CD4-positive, alpha-beta T cell (primary cell): ENCODE measurements at regions of chr5 and their contacts with region 1.

Region 1: DNA sequence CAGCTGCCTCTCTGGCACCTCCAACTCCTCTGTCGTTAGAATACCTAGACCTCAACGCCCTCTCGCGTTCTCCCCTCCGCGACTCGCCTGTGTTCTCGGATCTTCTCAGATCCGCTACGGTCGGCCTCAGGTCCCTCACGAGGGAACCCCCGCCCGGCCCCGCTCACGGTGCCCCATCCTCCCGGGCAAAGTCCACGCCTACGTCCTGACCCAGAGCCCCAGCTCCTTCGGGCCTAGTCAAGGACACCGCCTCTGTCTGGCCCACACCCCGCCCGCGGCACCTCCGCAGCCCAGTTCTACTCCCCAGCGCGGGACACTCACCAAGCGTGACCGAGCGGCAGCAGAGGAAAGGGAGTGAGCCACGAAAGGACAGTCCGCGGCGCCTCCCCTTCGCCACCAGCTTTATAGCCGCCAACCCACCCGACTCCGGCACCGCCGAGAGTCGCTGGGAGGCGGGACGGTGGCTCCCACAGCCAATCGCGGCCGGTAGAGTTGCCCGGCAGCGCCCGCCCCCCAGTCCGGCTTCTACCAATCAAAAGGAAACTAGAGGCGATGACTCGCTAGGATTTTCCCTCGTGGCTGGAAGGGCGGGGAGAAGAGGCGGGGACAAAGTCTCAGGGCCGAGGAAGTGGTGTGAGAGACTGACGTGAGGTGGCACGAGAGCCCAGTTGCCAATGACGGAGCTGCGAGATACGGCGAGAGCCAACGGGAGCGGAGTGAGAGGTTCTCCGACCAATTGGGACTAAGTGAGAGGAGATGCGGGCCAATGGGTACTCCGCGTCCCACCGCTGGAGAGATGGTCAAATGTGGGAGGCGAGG is at the start of gene HMGCS1:
- DNase-seq: peak; percentile 93 to 100 (median 98)
- ATAC-seq: peak; percentile 87
- H3K4me3 ChIP-seq: peak within 1 kb of the TSS; percentile 88
- H3K4me3 Mint-ChIP-seq: peak within 1 kb of the TSS; percentile 95
- H3K27ac ChIP-seq: peak within 1 kb of the TSS; percentile 96 to 97
- H3K27ac Mint-ChIP-seq: peak within 1 kb of the TSS; percentile 88
- H3K4me1 ChIP-seq: peaks cover 16% of the 10 kb centered on the region
- H3K4me1 Mint-ChIP-seq: peaks cover 24% of the 10 kb centered on the region
- H3K27me3 ChIP-seq: no peaks in the 10 kb centered on the region
- H3K27me3 Mint-ChIP-seq: no peaks in the 10 kb centered on the region
- CTCF ChIP-seq: no peak
- total RNA-seq, gene HMGCS1: 43.3 to 52.7 TPM

Region 2: DNA sequence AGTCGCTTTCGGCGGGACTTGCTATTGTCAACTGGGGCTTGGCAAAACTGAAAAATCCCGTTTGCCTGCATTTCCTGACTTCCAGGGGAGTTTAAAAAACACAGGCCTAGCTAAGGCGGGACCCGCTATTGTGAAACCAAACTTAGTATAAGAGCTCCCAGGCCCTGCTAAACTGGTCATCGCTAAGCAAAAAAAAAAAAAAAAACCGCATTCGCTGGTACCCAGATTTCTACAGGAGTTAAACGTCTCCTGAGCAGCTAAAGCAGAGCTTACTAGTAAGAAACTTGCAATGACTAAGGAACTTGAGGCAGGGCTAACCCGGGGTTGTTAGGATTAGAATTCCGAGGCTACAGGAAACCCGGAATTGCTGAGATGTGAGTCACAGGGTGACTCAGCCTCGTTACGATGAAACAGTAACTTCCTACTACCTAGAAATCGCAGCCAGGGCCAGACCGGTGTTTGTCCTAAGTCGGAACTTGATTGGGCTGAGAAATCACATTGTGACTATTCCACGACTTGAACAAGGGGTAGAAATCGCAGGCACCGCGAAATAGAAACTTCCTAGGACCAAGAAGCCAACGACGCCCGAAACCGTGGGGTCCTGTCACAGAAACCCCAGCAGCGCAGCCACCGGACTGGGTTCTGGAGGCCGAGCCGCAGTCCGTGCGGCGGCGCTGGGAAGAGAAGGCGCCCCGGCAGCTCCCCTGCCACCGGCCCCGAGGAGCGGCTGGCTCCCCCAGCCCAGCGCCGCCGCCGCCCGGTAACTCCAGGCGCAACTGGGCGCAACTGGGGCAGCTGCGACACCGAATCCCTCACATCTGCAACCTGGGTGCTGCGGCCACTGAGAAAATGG is 362.6 kb before region 1 on chr5:
- CTCF ChIA-PET with region 1: no interaction called
- POLR2A ChIA-PET with region 1: interaction called, 16 read pairs
- intact Hi-C with region 1: no loop called
- DNase-seq: peak; percentile 35 to 90 (median 61)
- ATAC-seq: peak; percentile 41
- H3K4me3 ChIP-seq: peak overlapping the region; percentile 75
- H3K4me3 Mint-ChIP-seq: peak overlapping the region; percentile 98
- H3K27ac ChIP-seq: peak overlapping the region; percentile 96 to 98
- H3K27ac Mint-ChIP-seq: peak overlapping the region; percentile 99
- H3K4me1 ChIP-seq: peaks cover 45% of the 10 kb centered on the region
- H3K4me1 Mint-ChIP-seq: peaks cover 30% of the 10 kb centered on the region
- H3K27me3 ChIP-seq: no peaks in the 10 kb centered on the region
- H3K27me3 Mint-ChIP-seq: no peaks in the 10 kb centered on the region
- CTCF ChIP-seq: no peak

Region 3: GRCh38 chr5:43019614-43020293 is 293.5 kb before region 1 on chr5:
- CTCF ChIA-PET with region 1: interaction called, 3 read pairs
- POLR2A ChIA-PET with region 1: interaction called, 32 read pairs
- intact Hi-C with region 1: no loop called
- DNase-seq: peak; percentile 73 to 97 (median 84)
- ATAC-seq: peak; percentile 61
- H3K4me3 ChIP-seq: peak overlapping the region; percentile 80
- H3K4me3 Mint-ChIP-seq: peak overlapping the region; percentile 99
- H3K27ac ChIP-seq: peak overlapping the region; percentile 98
- H3K27ac Mint-ChIP-seq: peak overlapping the region; percentile 100
- H3K4me1 ChIP-seq: peaks cover 42% of the 10 kb centered on the region
- H3K4me1 Mint-ChIP-seq: peaks cover 57% of the 10 kb centered on the region
- H3K27me3 ChIP-seq: no peaks in the 10 kb centered on the region
- H3K27me3 Mint-ChIP-seq: no peaks in the 10 kb centered on the region
- CTCF ChIP-seq: peak; percentile 69

Region 4: DNA sequence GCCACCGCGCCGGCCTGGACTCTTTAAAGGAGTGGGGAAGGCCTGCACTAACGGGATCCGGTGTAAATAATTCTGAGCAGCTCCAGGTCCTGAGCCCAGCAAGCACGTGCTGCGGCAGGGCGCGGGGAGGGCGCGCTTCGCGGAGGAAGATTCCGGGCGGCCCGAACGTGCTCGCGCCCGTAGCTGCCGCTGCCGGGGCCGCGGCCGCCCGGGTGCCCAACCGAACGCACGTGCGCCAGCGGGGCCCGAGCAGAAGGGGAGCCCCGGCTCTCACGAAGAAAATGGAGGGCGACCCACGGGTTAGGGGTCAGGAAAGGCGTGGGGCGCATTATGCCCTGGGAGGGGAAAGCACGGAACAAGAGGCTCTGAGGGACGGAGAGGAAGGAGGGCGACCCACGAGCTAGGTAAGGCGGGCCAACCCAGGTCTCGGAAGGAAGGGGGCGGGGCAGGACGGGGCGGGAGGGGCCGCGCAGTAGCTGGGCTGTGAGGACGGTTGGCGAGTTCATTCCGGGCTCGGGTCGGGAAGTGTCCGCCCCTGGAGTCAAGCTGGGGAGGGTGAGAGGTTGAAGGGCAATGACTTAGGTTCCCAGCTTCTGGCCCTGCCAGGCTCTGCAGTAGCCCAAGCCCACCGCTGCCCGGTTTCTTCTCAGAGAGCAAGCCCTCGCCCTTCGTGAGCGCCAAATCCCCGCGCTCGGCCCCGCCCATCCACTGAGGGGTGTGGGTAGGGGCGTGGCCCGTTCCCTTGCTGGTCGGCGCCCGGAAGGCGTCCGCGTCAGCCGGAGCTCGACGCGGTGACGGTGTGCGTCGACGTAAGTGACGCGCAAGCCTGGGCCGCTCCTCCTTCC is 192.3 kb before region 1 on chr5 and contains the start of gene ZNF131:
- CTCF ChIA-PET with region 1: interaction called, 3 read pairs
- POLR2A ChIA-PET with region 1: interaction called, 72 read pairs
- intact Hi-C with region 1: loop called (anchors 2 to 5 kb)
- DNase-seq: peak; percentile 92 to 99 (median 97)
- ATAC-seq: peak; percentile 84
- H3K4me3 ChIP-seq: peak within 1 kb of the TSS; percentile 91
- H3K4me3 Mint-ChIP-seq: peak within 1 kb of the TSS; percentile 97
- H3K27ac ChIP-seq: peak within 1 kb of the TSS; percentile 93 to 94
- H3K27ac Mint-ChIP-seq: peak within 1 kb of the TSS; percentile 94
- H3K4me1 ChIP-seq: peaks cover 30% of the 10 kb centered on the region
- H3K4me1 Mint-ChIP-seq: peaks cover 39% of the 10 kb centered on the region
- H3K27me3 ChIP-seq: no peaks in the 10 kb centered on the region
- H3K27me3 Mint-ChIP-seq: no peaks in the 10 kb centered on the region
- CTCF ChIP-seq: no peak
- total RNA-seq, gene ZNF131: 71.7 to 72.4 TPM

Region 5: DNA sequence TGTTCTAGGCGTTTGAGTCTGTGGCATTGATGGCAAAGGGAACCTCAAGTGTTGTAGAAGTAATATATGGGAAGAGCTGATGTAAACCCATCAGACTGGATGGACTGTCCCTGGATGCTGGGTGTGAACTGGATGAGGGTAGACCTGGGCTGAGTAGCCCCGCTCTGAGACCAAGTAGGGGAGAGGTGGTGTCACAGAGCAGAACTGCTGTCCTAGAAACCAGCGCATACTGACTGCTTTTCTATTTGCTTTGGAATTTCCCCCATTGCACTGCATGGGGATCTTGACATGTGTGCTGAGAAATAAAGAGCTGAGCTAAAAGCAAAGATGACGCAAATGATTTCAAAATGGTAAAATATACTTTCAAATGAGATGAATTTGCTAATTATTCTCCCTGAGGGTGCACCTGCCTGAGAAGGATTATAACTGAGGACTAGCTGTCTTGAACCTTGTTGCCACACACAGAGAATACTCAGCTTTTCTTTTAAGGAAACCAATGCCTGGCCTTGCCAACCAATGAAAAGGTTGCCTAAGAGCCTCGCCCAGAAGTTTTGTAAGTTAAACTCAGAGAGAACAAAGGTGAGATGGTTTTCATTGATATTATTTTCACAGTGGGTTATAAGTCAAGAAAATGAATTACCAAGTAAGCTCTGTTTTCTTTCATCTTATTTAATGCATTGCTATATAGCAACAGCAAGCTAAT is 76.4 kb before region 1 on chr5:
- CTCF ChIA-PET with region 1: no interaction called
- POLR2A ChIA-PET with region 1: no interaction called
- intact Hi-C with region 1: no loop called
- DNase-seq: no peak
- ATAC-seq: no peak
- H3K4me3 ChIP-seq: no peak overlapping the region
- H3K4me3 Mint-ChIP-seq: no peak overlapping the region
- H3K27ac ChIP-seq: no peak overlapping the region
- H3K27ac Mint-ChIP-seq: no peak overlapping the region
- H3K4me1 ChIP-seq: no peaks in the 10 kb centered on the region
- H3K4me1 Mint-ChIP-seq: no peaks in the 10 kb centered on the region
- H3K27me3 ChIP-seq: no peaks in the 10 kb centered on the region
- H3K27me3 Mint-ChIP-seq: peaks cover 5% of the 10 kb centered on the region
- CTCF ChIP-seq: no peak

Region 6: GRCh38 chr5:43376496-43377140 is 63.4 kb after region 1 on chr5:
- CTCF ChIA-PET with region 1: no interaction called
- POLR2A ChIA-PET with region 1: no interaction called
- intact Hi-C with region 1: no loop called
- DNase-seq: no peak
- ATAC-seq: no peak
- H3K4me3 ChIP-seq: no peak overlapping the region
- H3K4me3 Mint-ChIP-seq: no peak overlapping the region
- H3K27ac ChIP-seq: no peak overlapping the region
- H3K27ac Mint-ChIP-seq: no peak overlapping the region
- H3K4me1 ChIP-seq: no peaks in the 10 kb centered on the region
- H3K4me1 Mint-ChIP-seq: no peaks in the 10 kb centered on the region
- H3K27me3 ChIP-seq: no peaks in the 10 kb centered on the region
- H3K27me3 Mint-ChIP-seq: no peaks in the 10 kb centered on the region
- CTCF ChIP-seq: no peak

Region 7: GRCh38 chr5:43514816-43515677 is 201.8 kb after region 1 on chr5 and contains the start of gene C5orf34:
- CTCF ChIA-PET with region 1: no interaction called
- POLR2A ChIA-PET with region 1: interaction called, 7 read pairs
- intact Hi-C with region 1: loop called in 1 of 2 experiments (anchors 10 kb)
- DNase-seq: peak; percentile 88 to 98 (median 93)
- ATAC-seq: peak; percentile 87
- H3K4me3 ChIP-seq: peak within 1 kb of the TSS; percentile 63
- H3K4me3 Mint-ChIP-seq: peak within 1 kb of the TSS; percentile 92
- H3K27ac ChIP-seq: peak within 1 kb of the TSS; percentile 75 to 92
- H3K27ac Mint-ChIP-seq: peak within 1 kb of the TSS; percentile 92
- H3K4me1 ChIP-seq: peaks cover 10% of the 10 kb centered on the region
- H3K4me1 Mint-ChIP-seq: peaks cover 29% of the 10 kb centered on the region
- H3K27me3 ChIP-seq: no peaks in the 10 kb centered on the region
- H3K27me3 Mint-ChIP-seq: no peaks in the 10 kb centered on the region
- CTCF ChIP-seq: no peak
- total RNA-seq, gene C5orf34: 0.88 to 1.2 TPM

Region 8: GRCh38 chr5:43609752-43610151 is 296.5 kb after region 1 on chr5:
- CTCF ChIA-PET with region 1: no interaction called
- POLR2A ChIA-PET with region 1: no interaction called
- intact Hi-C with region 1: loop called in 1 of 2 experiments (anchors 5 kb)
- DNase-seq: peak in 4 of 14 experiments; percentile 4 to 37 (median 25)
- ATAC-seq: peak; percentile 77
- H3K4me3 ChIP-seq: no peak overlapping the region
- H3K4me3 Mint-ChIP-seq: no peak overlapping the region
- H3K27ac ChIP-seq: no peak overlapping the region
- H3K27ac Mint-ChIP-seq: no peak overlapping the region
- H3K4me1 ChIP-seq: peaks cover 4% of the 10 kb centered on the region
- H3K4me1 Mint-ChIP-seq: peaks cover 45% of the 10 kb centered on the region
- H3K27me3 ChIP-seq: no peaks in the 10 kb centered on the region
- H3K27me3 Mint-ChIP-seq: no peaks in the 10 kb centered on the region
- CTCF ChIP-seq: no peak